ENCODE measurements at regions of chr5 and their contacts with region 1.

Region 1: DNA sequence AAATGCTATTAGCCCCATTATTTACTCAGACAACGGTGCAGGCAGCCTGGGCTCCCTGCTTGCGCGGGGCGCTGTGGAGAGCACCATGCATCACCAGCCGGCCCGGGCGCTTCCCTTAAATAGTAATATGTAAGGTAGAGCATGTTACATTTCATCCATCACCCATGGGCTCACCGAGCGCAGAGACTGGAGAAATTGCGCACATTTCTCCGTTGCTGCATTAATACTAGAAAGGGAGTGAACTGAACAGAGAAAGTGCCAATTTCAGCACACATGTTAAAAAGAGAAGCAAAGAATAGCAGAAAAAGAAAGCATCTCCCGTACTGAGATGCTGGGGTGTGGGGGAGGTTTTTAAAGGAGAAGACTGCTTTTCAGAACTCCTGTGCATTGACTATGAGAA is 400.3 kb downstream of the ZSWIM6 start:
- DNase-seq: peak; percentile 54 to 71 (median 66)
- H3K4me3 ChIP-seq: peak overlapping the region; percentile 13 to 70 (median 52)
- H3K27ac ChIP-seq: peak overlapping the region in 58 of 59 donors; percentile 51 to 92 (median 81)
- H3K27me3 ChIP-seq: no peaks in the 10 kb centered on the region
- CTCF ChIP-seq: peak in 23 of 56 donors; percentile 6 to 31 (median 18)

Region 2: DNA sequence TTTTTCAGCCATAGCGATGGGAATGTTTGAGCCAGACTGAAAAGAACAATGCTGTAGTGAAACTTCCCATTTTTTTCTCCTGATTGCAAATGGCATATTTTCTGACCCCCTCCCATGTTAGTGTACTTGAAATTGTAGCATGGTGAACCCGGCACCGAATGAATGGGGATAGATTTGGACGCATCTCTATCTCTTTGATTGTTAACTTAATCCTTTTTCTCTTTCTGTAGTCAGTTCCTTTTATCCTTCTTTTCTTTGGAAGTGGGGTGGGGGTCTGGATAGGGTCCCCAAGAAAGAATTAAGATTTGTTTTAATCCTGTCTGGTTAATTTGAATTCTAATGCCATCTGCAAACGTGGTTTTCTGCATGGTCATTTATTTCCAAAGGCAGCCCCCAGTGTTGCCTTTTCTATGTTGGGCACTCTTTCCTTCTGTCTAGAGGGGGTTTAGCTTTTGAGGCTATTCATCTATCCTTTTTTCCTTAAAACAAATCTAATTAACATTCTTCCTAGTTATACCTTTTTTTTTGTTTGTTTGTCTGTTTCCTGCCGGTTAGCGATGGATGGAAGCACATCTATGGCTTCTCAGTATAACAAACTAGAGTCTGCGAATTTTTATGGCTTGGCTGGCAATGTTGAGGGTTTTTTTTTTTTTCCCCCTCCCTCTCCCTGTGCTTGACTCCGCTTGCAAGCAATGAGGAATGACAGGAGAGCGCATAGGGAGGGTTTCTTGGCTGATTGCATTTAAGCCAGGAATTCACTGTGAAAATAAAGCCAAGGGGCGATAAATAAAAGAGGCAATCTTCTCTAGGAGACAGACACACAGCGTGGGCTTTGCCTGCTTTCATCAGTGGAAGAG is 397.9 kb before region 1 on chr5:
- intact Hi-C with region 1: no loop called
- DNase-seq: no peak
- H3K4me3 ChIP-seq: peak overlapping the region; percentile 74 to 98 (median 91)
- H3K27ac ChIP-seq: peak overlapping the region in 54 of 59 donors; percentile 29 to 96 (median 86)
- H3K27me3 ChIP-seq: no peaks in the 10 kb centered on the region
- CTCF ChIP-seq: no peak

Region 3: GRCh38 chr5:61575103-61575502 is 157.3 kb before region 1 on chr5:
- intact Hi-C with region 1: no loop called
- DNase-seq: no peak
- H3K4me3 ChIP-seq: no peak overlapping the region
- H3K27ac ChIP-seq: no peak overlapping the region
- H3K27me3 ChIP-seq: no peaks in the 10 kb centered on the region
- CTCF ChIP-seq: no peak

Region 4: DNA sequence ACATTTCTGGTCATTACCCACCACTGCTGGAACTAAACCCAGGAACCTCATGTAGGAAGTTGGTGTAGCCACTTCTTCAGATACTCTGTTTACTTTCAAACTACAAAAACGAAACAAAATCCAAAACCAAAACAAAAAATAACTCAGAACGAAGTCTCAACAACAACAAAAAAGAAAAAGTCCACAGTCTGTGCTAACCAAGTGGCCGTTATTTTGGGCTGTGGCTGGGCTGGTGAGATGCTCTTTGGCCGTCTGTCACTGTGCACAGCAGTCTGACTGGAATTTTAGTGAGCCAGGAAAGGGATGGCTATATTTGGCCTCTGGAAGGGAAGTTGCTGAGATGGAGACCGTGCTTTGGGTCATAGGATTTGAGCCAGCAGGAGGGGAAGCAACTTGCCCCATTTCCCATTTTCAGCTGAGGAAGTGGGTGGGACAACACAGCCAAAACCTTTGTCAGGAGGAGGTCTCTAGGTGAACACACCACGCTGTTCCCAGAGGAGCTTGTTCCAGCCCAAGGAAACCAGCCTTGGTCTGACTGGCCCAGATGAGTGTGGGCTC is 66.2 kb before region 1 on chr5:
- intact Hi-C with region 1: loop called in 1 of 2 experiments (anchors 5 kb)
- DNase-seq: no peak
- H3K4me3 ChIP-seq: peak overlapping the region in 16 of 59 donors; percentile 1 to 39 (median 11)
- H3K27ac ChIP-seq: peak overlapping the region in 16 of 59 donors; percentile 2 to 57 (median 28)
- H3K27me3 ChIP-seq: no peaks in the 10 kb centered on the region
- CTCF ChIP-seq: no peak

Region 5: DNA sequence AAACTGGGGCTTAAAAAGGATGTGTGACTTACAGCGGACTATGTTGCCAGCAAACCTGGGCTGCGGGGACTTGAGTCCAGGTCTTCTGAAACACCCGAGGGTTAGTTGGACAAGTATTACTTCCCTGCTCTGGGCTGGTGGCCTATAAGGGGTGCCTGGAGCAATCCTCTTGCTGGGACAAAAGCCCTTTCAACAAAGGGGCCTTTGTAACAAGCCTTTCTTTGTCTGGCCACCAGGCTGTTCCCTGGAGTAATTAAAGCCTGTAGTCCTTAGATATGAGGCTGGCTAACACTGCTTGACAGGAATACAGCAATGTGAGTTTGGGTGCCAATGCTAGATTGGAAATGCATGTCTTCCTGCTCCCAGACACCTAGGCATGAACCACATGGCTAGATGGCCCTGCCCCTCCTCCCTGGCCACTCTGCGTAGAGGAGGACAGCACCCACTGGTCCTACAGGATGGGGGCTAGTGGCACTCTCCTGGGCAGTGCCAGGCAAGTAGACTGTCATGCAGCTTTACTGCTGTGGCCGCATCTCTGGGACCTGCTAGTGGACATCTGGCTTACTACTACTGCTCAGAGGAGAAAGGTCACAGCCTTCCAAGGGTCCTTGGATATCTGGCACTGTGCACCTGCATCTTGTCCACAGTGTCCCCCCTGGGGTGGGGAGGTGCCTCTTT is 57.2 kb before region 1 on chr5:
- intact Hi-C with region 1: loop called in 1 of 2 experiments (anchors 5 kb)
- DNase-seq: peak in 7 of 10 donors; percentile 10 to 73 (median 46)
- H3K4me3 ChIP-seq: peak overlapping the region in 5 of 59 donors; percentile 3 to 17 (median 9)
- H3K27ac ChIP-seq: peak overlapping the region in 57 of 59 donors; percentile 3 to 90 (median 81)
- H3K27me3 ChIP-seq: no peaks in the 10 kb centered on the region
- CTCF ChIP-seq: peak in 43 of 56 donors; percentile 8 to 63 (median 37)

Region 6: DNA sequence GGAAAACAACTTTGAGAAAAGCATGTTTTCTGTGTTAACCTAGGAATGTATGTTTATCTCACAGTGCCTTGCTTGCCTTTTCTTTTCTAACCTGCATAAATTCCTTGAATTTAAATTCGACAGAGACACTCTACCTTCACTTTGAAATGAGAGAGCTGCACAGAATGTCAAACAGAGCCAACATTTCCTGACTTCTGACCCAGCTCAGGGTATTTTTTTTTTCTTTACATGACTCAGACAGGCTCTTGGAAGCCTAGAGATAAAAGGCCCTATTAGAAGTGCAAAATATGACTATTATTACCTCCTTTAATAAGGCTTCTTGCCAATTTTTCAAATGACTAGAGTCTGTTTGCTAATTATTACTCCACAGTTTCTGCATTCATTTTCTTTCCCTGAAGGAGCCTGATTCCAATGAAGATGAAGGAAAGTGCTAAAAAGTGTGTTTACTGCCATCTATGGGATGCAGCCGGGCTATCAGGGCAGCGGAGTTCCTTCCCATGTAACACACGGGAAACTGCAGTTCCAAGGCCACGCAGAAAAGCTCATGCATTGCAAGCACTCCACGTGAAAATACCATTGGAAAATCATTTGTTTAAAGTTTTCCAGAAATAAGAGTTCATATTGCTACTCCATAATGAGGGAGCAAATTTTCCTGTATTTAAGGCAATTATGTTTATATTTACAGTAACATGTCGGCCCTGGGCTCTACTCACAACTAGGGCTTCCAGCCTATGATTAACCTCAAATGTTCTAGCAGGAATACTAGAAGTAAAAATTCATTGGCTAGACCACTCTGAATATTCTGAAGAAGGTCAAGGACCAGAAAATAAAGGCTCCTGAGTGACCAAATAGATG is 85.3 kb after region 1 on chr5:
- intact Hi-C with region 1: loop called in 1 of 2 experiments (anchors 5 kb)
- DNase-seq: peak; percentile 31 to 82 (median 72)
- H3K4me3 ChIP-seq: peak overlapping the region in 2 of 59 donors; percentile 13 to 14
- H3K27ac ChIP-seq: peak overlapping the region in 2 of 59 donors; percentile 6 to 10
- H3K27me3 ChIP-seq: peaks cover 0 to under 1% (median 0%) of the 10 kb centered on the region in 45 donors
- CTCF ChIP-seq: peak; percentile 40 to 87 (median 74)

Measured in dorsolateral prefrontal cortex (tissue), 120 donors.